ENCODE measurements at regions of chr6 and their contacts with region 1.

Region 1: GRCh38 chr6:16964553-16965501 is 137.0 kb upstream of the STMND1 start:
- DNase-seq: peak; percentile 94
- H3K4me3 ChIP-seq: peak overlapping the region in 3 of 4 donors; percentile 1 to 32 (median 15)
- H3K27ac ChIP-seq: no peak overlapping the region
- H3K4me1 ChIP-seq: peaks cover 8 to 9% (median 8%) of the 10 kb centered on the region in 4 donors
- H3K27me3 ChIP-seq: no peaks in the 10 kb centered on the region
- CTCF ChIP-seq: peak; percentile 83 to 95 (median 92)
- EP300 ChIP-seq: no peak
- POLR2A ChIP-seq: no peak

Region 2: GRCh38 chr6:16332175-16332542 is 632.7 kb before region 1 on chr6:
- intact Hi-C with region 1: loop called (anchors 10 kb)
- DNase-seq: no peak
- H3K4me3 ChIP-seq: no peak overlapping the region
- H3K27ac ChIP-seq: no peak overlapping the region
- H3K4me1 ChIP-seq: peaks cover 41 to 50% (median 50%) of the 10 kb centered on the region in 4 donors
- H3K27me3 ChIP-seq: no peaks in the 10 kb centered on the region
- CTCF ChIP-seq: peak; percentile 90 to 95 (median 91)
- EP300 ChIP-seq: no peak
- POLR2A ChIP-seq: no peak

Region 3: DNA sequence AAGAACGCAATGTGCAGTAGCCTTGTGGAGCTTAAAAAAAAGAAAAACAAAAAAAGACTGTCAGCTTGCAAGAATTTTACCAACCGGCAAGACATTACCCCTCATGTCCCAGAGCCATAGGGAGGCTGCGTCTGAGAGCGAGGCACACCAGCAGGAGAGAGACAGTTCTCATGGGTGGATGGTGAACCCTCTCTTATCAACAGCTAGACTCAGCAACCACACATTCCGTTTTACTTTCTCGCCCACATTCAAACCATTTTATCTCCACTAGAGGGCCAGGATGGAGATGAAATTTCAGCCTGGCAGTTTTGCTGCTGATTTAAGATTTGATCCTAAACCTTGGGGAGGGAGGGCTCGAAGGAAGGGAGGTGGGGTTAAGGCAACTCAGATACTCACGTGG is 450.6 kb before region 1 on chr6:
- intact Hi-C with region 1: loop called (anchors 10 kb)
- DNase-seq: no peak
- H3K4me3 ChIP-seq: no peak overlapping the region
- H3K27ac ChIP-seq: no peak overlapping the region
- H3K4me1 ChIP-seq: peaks cover 21 to 34% (median 29%) of the 10 kb centered on the region in 4 donors
- H3K27me3 ChIP-seq: no peaks in the 10 kb centered on the region
- CTCF ChIP-seq: peak in 1 of 3 experiments; percentile 37
- EP300 ChIP-seq: no peak
- POLR2A ChIP-seq: no peak

Region 4: DNA sequence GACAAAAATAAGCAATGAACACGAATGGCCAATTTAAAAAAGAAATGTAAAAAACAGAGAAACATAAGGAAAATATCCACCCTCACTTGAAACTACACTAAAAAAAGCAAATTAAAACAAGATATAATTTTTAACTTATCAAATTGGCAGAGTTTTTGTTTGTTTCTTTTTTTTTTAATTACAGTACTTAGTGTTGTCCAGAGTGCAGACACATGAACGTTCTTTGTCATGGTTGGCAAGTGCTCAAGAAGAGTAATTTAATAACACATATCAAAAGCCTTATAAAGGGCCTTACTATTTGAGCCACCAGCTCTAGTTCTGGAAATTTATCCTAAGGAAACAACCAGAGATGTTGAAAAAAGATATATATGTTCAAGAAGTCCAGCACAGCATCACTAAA is 345.9 kb before region 1 on chr6:
- intact Hi-C with region 1: no loop called
- DNase-seq: no peak
- H3K4me3 ChIP-seq: no peak overlapping the region
- H3K27ac ChIP-seq: no peak overlapping the region
- H3K4me1 ChIP-seq: peaks cover 0 to 16% (median 7%) of the 10 kb centered on the region in 4 donors
- H3K27me3 ChIP-seq: no peaks in the 10 kb centered on the region
- CTCF ChIP-seq: no peak
- EP300 ChIP-seq: no peak
- POLR2A ChIP-seq: no peak

Region 5: DNA sequence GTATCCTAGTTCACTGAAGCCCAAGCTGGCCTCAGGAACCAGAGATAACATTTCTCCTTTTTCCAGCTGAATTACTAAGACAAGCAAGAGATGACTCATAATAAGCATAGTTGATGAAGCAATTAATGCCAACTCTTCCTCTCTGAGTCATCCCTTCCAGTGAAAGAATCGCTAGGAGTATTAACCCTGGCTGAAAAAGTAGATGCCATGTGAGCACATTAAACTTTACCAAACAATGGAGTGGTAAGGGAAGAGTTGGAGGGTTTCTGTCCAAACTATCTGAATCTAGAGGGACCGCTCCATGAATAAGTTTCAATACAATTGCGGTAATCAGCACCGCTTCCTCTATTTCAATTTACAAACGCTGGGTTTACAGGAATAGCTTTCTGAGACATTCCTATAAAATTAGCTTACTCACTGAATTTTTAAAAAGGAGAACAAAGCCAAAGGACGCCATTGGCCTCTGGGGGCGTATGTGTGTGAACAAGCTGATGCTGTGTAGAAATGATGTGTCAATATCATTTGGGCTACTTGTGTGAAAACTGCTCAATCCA is 251.8 kb before region 1 on chr6:
- intact Hi-C with region 1: no loop called
- DNase-seq: no peak
- H3K4me3 ChIP-seq: peak overlapping the region in 2 of 4 donors; percentile 3 to 12
- H3K27ac ChIP-seq: peak overlapping the region; percentile 53 to 76 (median 74)
- H3K4me1 ChIP-seq: peaks cover 10 to 27% (median 25%) of the 10 kb centered on the region in 4 donors
- H3K27me3 ChIP-seq: no peaks in the 10 kb centered on the region
- CTCF ChIP-seq: peak in 1 of 3 experiments; percentile 14
- EP300 ChIP-seq: no peak
- POLR2A ChIP-seq: no peak

Region 6: GRCh38 chr6:16770701-16771569 is 193.9 kb before region 1 on chr6:
- intact Hi-C with region 1: loop called (anchors 5 kb)
- DNase-seq: no peak
- H3K4me3 ChIP-seq: no peak overlapping the region
- H3K27ac ChIP-seq: peak overlapping the region; percentile 39 to 73 (median 66)
- H3K4me1 ChIP-seq: peaks cover 31 to 43% (median 40%) of the 10 kb centered on the region in 4 donors
- H3K27me3 ChIP-seq: no peaks in the 10 kb centered on the region
- CTCF ChIP-seq: peak; percentile 93 to 97 (median 94)
- EP300 ChIP-seq: no peak
- POLR2A ChIP-seq: no peak

Region 7: GRCh38 chr6:16803294-16804200 is 161.3 kb before region 1 on chr6:
- intact Hi-C with region 1: loop called (anchors 10 kb)
- DNase-seq: no peak
- H3K4me3 ChIP-seq: peak overlapping the region; percentile 41 to 44 (median 42)
- H3K27ac ChIP-seq: peak overlapping the region; percentile 73 to 77 (median 74)
- H3K4me1 ChIP-seq: peaks cover 41 to 52% (median 48%) of the 10 kb centered on the region in 4 donors
- H3K27me3 ChIP-seq: no peaks in the 10 kb centered on the region
- CTCF ChIP-seq: no peak
- EP300 ChIP-seq: no peak
- POLR2A ChIP-seq: no peak

Region 8: GRCh38 chr6:17130786-17131185 is 166.0 kb after region 1 on chr6:
- intact Hi-C with region 1: no loop called
- DNase-seq: no peak
- H3K4me3 ChIP-seq: no peak overlapping the region
- H3K27ac ChIP-seq: no peak overlapping the region
- H3K4me1 ChIP-seq: no peaks in the 10 kb centered on the region
- H3K27me3 ChIP-seq: no peaks in the 10 kb centered on the region
- CTCF ChIP-seq: no peak
- EP300 ChIP-seq: no peak
- POLR2A ChIP-seq: no peak

Region 9: DNA sequence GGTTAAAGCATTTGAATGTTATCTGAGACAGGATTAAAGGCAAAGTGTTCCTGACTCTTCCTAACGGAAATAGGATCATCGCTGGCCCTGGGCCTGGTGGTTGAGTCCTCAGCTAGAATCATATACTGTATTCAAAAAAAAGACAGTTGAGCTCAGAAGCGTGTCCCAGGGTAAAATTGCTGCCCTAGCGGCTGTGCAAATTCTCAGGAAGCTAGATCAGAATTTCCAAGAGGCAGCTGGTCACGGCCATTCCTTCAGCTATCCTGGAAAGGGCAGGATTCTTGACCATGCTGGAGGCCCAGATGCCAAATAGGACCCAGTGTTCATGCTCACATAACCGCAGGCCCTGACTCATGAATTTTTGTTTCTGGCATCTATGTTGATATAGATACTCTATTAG is 204.5 kb after region 1 on chr6:
- intact Hi-C with region 1: no loop called
- DNase-seq: no peak
- H3K4me3 ChIP-seq: no peak overlapping the region
- H3K27ac ChIP-seq: no peak overlapping the region
- H3K4me1 ChIP-seq: no peaks in the 10 kb centered on the region
- H3K27me3 ChIP-seq: no peaks in the 10 kb centered on the region
- CTCF ChIP-seq: no peak
- EP300 ChIP-seq: no peak
- POLR2A ChIP-seq: no peak